WTC11 (cell line): ENCODE measurements at regions of chr10 and their contacts with region 1.

Region 1: DNA sequence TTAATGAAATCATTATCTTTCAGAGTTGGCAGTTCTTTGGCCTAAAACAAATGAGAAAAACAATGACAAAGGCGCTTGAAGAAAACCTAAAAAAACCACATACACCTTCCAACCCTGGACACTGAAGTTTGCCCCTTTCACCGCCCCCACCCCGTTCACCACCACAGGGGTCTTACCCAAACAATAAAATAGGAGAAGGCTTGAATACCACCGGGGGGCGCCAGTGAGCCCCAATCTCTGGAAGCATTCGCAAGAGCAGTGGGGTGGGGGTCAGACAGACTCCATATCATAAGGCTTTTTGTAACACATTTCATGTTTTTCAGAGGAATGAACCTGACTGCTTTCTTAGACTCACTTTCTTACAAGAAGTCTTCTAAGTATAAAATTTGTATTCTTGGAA is 163.6 kb downstream of the PIP4K2A start:
- DNase-seq: peak; percentile 83
- ATAC-seq: peak; percentile 70
- H3K4me3 Mint-ChIP-seq: no peak overlapping the region
- H3K27ac Mint-ChIP-seq: peak overlapping the region; percentile 23; the same call in 1 of the 2 replicates
- H3K4me1 Mint-ChIP-seq: peaks cover 23% of the 10 kb centered on the region
- H3K27me3 Mint-ChIP-seq: no peaks in the 10 kb centered on the region
- CTCF ChIP-seq: peak; percentile 75

Region 2: DNA sequence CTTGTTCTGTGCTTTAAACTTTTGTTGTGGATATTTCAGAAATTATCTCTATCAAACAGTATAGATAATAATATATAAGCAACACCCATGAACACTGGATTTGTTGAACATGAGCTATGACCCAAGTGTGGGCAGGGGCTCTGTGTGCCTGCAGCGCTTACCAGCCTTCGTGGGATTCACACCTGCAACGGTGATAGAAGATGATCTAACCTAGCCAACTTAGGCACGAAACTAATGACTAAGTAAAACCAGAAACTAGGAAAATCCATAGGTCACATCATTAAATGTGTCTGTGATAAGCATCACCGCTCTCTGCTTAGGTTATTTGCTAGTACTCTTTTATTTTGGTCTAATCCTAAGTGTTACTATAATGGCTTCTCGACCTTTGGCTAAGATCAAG is 187.4 kb before region 1 on chr10:
- CTCF ChIA-PET with region 1: no interaction called
- POLR2A ChIA-PET with region 1: no interaction called
- DNase-seq: no peak
- ATAC-seq: no peak
- H3K4me3 Mint-ChIP-seq: no peak overlapping the region
- H3K27ac Mint-ChIP-seq: no peak overlapping the region
- H3K4me1 Mint-ChIP-seq: 0 out of 2 replicates have a peak, but pooled peaks cover 3% of the 10 kb centered on the region
- H3K27me3 Mint-ChIP-seq: no peaks in the 10 kb centered on the region
- CTCF ChIP-seq: no peak

Region 3: GRCh38 chr10:22684699-22685098 is 134.0 kb after region 1 on chr10:
- CTCF ChIA-PET with region 1: no interaction called
- POLR2A ChIA-PET with region 1: interaction called, 10 read pairs
- DNase-seq: no peak
- ATAC-seq: no peak
- H3K4me3 Mint-ChIP-seq: no peak overlapping the region
- H3K27ac Mint-ChIP-seq: peak overlapping the region; percentile 44; the same call in 1 of the 2 replicates
- H3K4me1 Mint-ChIP-seq: peaks cover 82% of the 10 kb centered on the region
- H3K27me3 Mint-ChIP-seq: no peaks in the 10 kb centered on the region; the same call in 1 of the 2 replicates
- CTCF ChIP-seq: no peak